Activated CD4-positive, alpha-beta memory T cell treated with anti-CD3 and anti-CD28 coated beads for 36 hours (primary cell): ENCODE measurements at regions of chr19 and their contacts with region 1.

Region 1: GRCh38 chr19:21396893-21397572 is at the start of gene ZNF493:
- DNase-seq: peak; percentile 95
- H3K4me3 Mint-ChIP-seq: peak within 1 kb of the TSS; percentile 95
- H3K27ac Mint-ChIP-seq: peak within 1 kb of the TSS; percentile 87
- H3K4me1 Mint-ChIP-seq: peaks cover 24% of the 10 kb centered on the region
- H3K27me3 Mint-ChIP-seq: no peaks in the 10 kb centered on the region
- total RNA-seq, gene ZNF493: 9.6 to 11.1 TPM

Region 2: DNA sequence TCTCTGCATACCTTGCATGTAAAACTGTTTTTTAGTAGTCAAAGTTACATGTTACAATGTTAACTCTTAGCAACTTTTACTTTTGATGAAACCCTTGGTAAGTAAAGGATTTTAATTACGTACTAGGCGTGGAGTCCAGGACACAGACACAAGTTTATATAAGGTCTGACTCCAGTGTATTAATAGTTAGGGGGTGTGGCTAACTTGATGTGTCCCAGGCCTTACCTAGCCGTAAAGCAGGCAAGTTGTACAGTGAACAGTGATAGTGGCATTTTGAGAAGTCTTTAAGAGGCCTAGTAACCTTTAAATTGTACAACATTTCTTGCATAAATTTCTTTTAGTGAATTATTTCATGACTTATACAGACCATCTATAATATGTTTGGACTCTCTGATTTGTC is 309.2 kb before region 1 on chr19:
- CTCF ChIA-PET with region 1: no interaction called
- POLR2A ChIA-PET with region 1: no interaction called
- intact Hi-C with region 1: no loop called
- DNase-seq: no peak
- H3K4me3 Mint-ChIP-seq: no peak overlapping the region
- H3K27ac Mint-ChIP-seq: no peak overlapping the region
- H3K4me1 Mint-ChIP-seq: peaks cover 25% of the 10 kb centered on the region
- H3K27me3 Mint-ChIP-seq: no peaks in the 10 kb centered on the region

Region 3: GRCh38 chr19:21358768-21359451 is 38.1 kb before region 1 on chr19 and contains the start of gene ZNF738:
- CTCF ChIA-PET with region 1: interaction called, 5 read pairs
- POLR2A ChIA-PET with region 1: interaction called, 8 read pairs
- intact Hi-C with region 1: loop called (anchors 2 kb)
- DNase-seq: peak; percentile 92
- H3K4me3 Mint-ChIP-seq: peak within 1 kb of the TSS; percentile 99
- H3K27ac Mint-ChIP-seq: peak within 1 kb of the TSS; percentile 95
- H3K4me1 Mint-ChIP-seq: peaks cover 12% of the 10 kb centered on the region
- H3K27me3 Mint-ChIP-seq: no peaks in the 10 kb centered on the region
- total RNA-seq, gene ZNF738: 11.8 to 15.3 TPM

Region 4: DNA sequence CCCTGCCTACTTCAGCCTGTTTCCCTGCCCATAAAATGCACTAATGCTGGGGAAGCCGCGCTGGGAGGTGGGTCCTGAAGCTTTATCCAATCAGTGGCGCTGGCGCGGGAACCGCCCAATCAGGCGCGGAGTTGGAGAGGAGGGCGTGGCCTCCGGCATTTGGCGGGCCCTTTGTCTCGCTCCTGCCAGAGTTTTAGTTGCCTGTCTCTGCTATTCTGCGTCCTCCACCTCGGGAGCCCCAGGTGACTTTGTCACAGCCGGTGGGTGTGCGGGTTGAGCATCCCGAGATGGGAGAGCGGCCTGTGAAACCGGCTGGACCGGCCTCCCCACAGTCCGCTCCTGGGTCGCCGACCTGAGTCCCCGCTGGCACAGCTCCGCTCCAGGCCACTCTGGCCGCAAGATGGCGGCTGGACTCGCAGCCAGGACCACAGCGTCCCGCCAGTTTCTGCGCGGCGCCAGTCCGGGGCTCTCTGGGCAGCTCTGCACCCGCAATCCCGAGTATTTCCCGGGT is 77.7 kb after region 1 on chr19:
- CTCF ChIA-PET with region 1: interaction called, 3 read pairs
- POLR2A ChIA-PET with region 1: no interaction called
- intact Hi-C with region 1: loop called (anchors 5 kb)
- DNase-seq: peak; percentile 94
- H3K4me3 Mint-ChIP-seq: peak overlapping the region; percentile 79
- H3K27ac Mint-ChIP-seq: no peak overlapping the region
- H3K4me1 Mint-ChIP-seq: peaks cover 4% of the 10 kb centered on the region
- H3K27me3 Mint-ChIP-seq: no peaks in the 10 kb centered on the region